Caco-2 (cell line): ENCODE measurements at regions of chr1 and their contacts with region 1.

Region 1: DNA sequence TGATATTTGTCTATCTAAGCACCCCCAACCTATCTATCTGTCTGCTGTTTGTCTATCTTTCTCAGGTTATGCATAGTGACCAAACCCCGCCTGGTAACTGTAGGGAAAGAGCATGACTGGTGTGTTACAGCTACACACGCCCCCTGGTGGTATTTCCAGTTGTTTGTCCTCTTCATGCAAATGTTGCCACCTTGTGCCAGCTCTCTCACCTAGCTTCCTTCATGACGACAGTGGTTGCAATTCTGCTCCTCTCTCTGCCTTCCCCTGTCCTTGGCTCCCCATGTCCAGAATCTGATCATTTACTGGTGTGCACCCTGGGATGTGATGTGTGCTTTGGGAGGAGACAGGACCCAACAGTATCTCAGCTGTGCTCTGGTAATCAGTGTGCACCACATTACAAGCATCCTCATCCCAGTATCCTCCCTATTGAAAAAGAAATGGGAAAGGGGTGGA is 8.1 kb upstream of the INKA2 start:
- DNase-seq: peak; percentile 76 to 80
- H3K4me3 ChIP-seq: no peak overlapping the region
- H3K4me3 Mint-ChIP-seq: no peak overlapping the region
- H3K27ac Mint-ChIP-seq: no peak overlapping the region
- H3K4me1 ChIP-seq: no peaks in the 10 kb centered on the region
- H3K4me1 Mint-ChIP-seq: no peaks in the 10 kb centered on the region
- H3K27me3 ChIP-seq: no peaks in the 10 kb centered on the region
- H3K27me3 Mint-ChIP-seq: no peaks in the 10 kb centered on the region
- CTCF ChIP-seq: peak; percentile 60 to 74

Region 2: GRCh38 chr1:111720274-111720976 is 26.9 kb before region 1 on chr1:
- CTCF ChIA-PET with region 1: no interaction called
- POLR2A ChIA-PET with region 1: no interaction called
- intact Hi-C with region 1: loop called (anchors 1 kb)
- DNase-seq: no peak
- H3K4me3 ChIP-seq: no peak overlapping the region
- H3K4me3 Mint-ChIP-seq: no peak overlapping the region
- H3K27ac Mint-ChIP-seq: peak overlapping the region; percentile 60
- H3K4me1 ChIP-seq: no peaks in the 10 kb centered on the region
- H3K4me1 Mint-ChIP-seq: peaks cover 18% of the 10 kb centered on the region
- H3K27me3 ChIP-seq: no peaks in the 10 kb centered on the region
- H3K27me3 Mint-ChIP-seq: no peaks in the 10 kb centered on the region
- CTCF ChIP-seq: no peak